PC-3 (cell line): ENCODE measurements at regions of chr1 and their contacts with region 1.

Region 1: GRCh38 chr1:17274186-17275170 is 25.6 kb downstream of the PADI3 start:
- DNase-seq: peak; percentile 65
- ATAC-seq: peak; percentile 51; the same call in 1 of the 2 replicates
- H3K4me3 ChIP-seq: no peak overlapping the region
- H3K27ac ChIP-seq: no peak overlapping the region
- H3K4me1 ChIP-seq: peaks cover 10% of the 10 kb centered on the region
- H3K27me3 ChIP-seq: no peaks in the 10 kb centered on the region
- CTCF ChIP-seq: peak; percentile 84

Region 2: GRCh38 chr1:17292299-17292698 is 17.8 kb after region 1 on chr1:
- CTCF ChIA-PET with region 1: interaction called, 10 read pairs
- POLR2A ChIA-PET with region 1: no interaction called
- intact Hi-C with region 1: no loop called
- DNase-seq: peak; percentile 78
- ATAC-seq: peak; percentile 19; the same call in 1 of the 2 replicates
- H3K4me3 ChIP-seq: no peak overlapping the region
- H3K27ac ChIP-seq: peak overlapping the region; percentile 83
- H3K4me1 ChIP-seq: peaks cover 44% of the 10 kb centered on the region
- H3K27me3 ChIP-seq: no peaks in the 10 kb centered on the region
- CTCF ChIP-seq: no peak

Region 3: DNA sequence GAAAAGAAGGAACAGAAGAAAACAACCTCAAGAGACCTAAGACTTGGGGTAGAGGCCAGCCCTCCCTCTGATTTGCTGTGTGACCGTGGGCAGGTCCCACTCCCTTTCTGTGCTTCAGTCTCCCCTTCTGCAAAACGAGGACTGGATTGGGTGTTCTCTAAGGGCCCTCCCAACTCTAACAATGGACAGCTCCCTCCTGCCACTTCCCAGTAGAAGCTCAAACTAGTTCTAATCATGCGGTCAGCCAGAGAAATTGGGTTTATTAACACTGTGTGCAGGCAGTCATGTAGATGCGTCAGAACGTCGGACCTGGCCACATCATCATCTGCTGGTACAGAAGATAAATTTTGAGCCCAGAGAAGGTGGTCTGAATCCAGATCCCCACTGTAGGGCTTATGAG is 31.9 kb after region 1 on chr1:
- CTCF ChIA-PET with region 1: interaction called, 11 read pairs
- POLR2A ChIA-PET with region 1: no interaction called
- intact Hi-C with region 1: no loop called
- DNase-seq: no peak
- ATAC-seq: no peak
- H3K4me3 ChIP-seq: no peak overlapping the region
- H3K27ac ChIP-seq: no peak overlapping the region
- H3K4me1 ChIP-seq: peaks cover 30% of the 10 kb centered on the region
- H3K27me3 ChIP-seq: no peaks in the 10 kb centered on the region
- CTCF ChIP-seq: no peak